Natural killer cell (primary cell): ENCODE measurements at regions of chr13 and their contacts with region 1.

Region 1: GRCh38 chr13:32315238-32316027 is at the starts of genes BRCA2 and ZAR1L:
- DNase-seq: peak; percentile 87 to 95
- ATAC-seq: peak; percentile 80 to 93 (median 86)
- H3K4me3 ChIP-seq: peak within 1 kb of the TSS; percentile 87
- H3K4me3 Mint-ChIP-seq: peak within 1 kb of the TSS; percentile 98
- H3K27ac ChIP-seq: peak within 1 kb of the TSS; percentile 99
- H3K27ac Mint-ChIP-seq: peak within 1 kb of the TSS; percentile 98 to 100
- H3K4me1 ChIP-seq: peaks cover 18% of the 10 kb centered on the region
- H3K4me1 Mint-ChIP-seq: peaks cover 14 to 21% of the 10 kb centered on the region in 2 donors
- H3K27me3 ChIP-seq: no peaks in the 10 kb centered on the region
- H3K27me3 Mint-ChIP-seq: no peaks in the 10 kb centered on the region
- CTCF ChIP-seq: no peak
- total RNA-seq, gene BRCA2: 3.6 to 4.3 (median 3.6) TPM
- total RNA-seq, gene ZAR1L: 0.23 TPM in 1 of 3 donors, not detected in the others

Region 2: GRCh38 chr13:31807090-31807541 is 508.3 kb before region 1 on chr13:
- intact Hi-C with region 1: loop called (anchors 2 kb)
- DNase-seq: peak; percentile 64 to 71
- ATAC-seq: peak; percentile 89 to 95 (median 90)
- H3K4me3 ChIP-seq: no peak overlapping the region
- H3K4me3 Mint-ChIP-seq: peak overlapping the region; percentile 61
- H3K27ac ChIP-seq: peak overlapping the region; percentile 86
- H3K27ac Mint-ChIP-seq: peak overlapping the region; percentile 78 to 87
- H3K4me1 ChIP-seq: peaks cover 32% of the 10 kb centered on the region
- H3K4me1 Mint-ChIP-seq: peaks cover 47 to 48% of the 10 kb centered on the region in 2 donors
- H3K27me3 ChIP-seq: peaks cover 6% of the 10 kb centered on the region
- H3K27me3 Mint-ChIP-seq: peaks cover 9 to 12% of the 10 kb centered on the region in 2 donors
- CTCF ChIP-seq: no peak

Region 3: GRCh38 chr13:32031025-32031814 is 284.2 kb before region 1 on chr13 and contains the start of gene FRY:
- intact Hi-C with region 1: loop called (anchors 10 kb)
- DNase-seq: peak; percentile 39 to 73
- ATAC-seq: peak; percentile 79 to 86 (median 81)
- H3K4me3 ChIP-seq: peak within 1 kb of the TSS; percentile 74
- H3K4me3 Mint-ChIP-seq: peak within 1 kb of the TSS; percentile 93
- H3K27ac ChIP-seq: peak within 1 kb of the TSS; percentile 48
- H3K27ac Mint-ChIP-seq: peak within 1 kb of the TSS; percentile 64 to 78
- H3K4me1 ChIP-seq: peaks cover 8% of the 10 kb centered on the region
- H3K4me1 Mint-ChIP-seq: peaks cover 10 to 22% of the 10 kb centered on the region in 2 donors
- H3K27me3 ChIP-seq: no peaks in the 10 kb centered on the region
- H3K27me3 Mint-ChIP-seq: peaks cover 3 to 20% of the 10 kb centered on the region in 2 donors
- CTCF ChIP-seq: no peak
- total RNA-seq, gene FRY: 25.1 to 52.1 (median 27.4) TPM

Region 4: DNA sequence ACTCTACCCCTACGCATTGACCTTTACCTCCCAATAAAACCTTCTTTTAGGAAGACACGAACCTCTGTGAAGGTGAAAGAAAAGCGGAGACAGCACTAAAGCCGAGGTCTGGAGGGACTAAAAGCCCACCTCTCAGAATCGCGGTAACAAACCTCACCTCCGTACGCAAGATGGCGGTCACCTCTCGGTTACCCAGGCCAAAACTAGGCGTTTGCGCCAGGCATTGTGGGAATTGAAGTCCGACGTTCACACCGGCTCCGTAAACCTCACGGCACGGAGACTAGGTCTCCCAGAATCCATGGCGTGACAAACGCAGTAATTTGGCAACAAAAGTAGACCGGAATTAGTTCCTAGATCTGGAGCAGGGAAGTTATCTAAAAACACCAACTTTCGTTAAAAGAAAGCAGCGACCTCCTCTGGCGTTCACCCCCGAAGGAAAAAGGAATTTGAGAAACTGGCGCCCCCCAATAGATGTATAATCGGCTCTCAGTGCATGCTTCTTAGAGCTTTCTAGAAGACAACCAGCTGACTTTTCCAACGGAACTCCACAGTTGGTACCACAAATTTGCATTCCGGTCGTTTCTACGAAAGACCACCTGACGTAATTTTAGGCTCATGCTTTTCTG is 223.3 kb after region 1 on chr13 and contains the start of gene N4BP2L2:
- intact Hi-C with region 1: loop called (anchors 2 kb)
- DNase-seq: peak; percentile 85 to 97
- ATAC-seq: peak; percentile 94 to 98 (median 96)
- H3K4me3 ChIP-seq: peak within 1 kb of the TSS; percentile 96
- H3K4me3 Mint-ChIP-seq: peak within 1 kb of the TSS; percentile 99
- H3K27ac ChIP-seq: peak within 1 kb of the TSS; percentile 99
- H3K27ac Mint-ChIP-seq: peak within 1 kb of the TSS; percentile 98 to 99
- H3K4me1 ChIP-seq: peaks cover 15% of the 10 kb centered on the region
- H3K4me1 Mint-ChIP-seq: peaks cover 48 to 50% of the 10 kb centered on the region in 2 donors
- H3K27me3 ChIP-seq: no peaks in the 10 kb centered on the region
- H3K27me3 Mint-ChIP-seq: peaks cover 0 to 4% of the 10 kb centered on the region in 2 donors
- CTCF ChIP-seq: no peak
- total RNA-seq, gene N4BP2L2: 195 to 247 (median 221) TPM